PC-9 (cell line): ENCODE measurements at regions of chr7 and their contacts with region 1.

Region 1: DNA sequence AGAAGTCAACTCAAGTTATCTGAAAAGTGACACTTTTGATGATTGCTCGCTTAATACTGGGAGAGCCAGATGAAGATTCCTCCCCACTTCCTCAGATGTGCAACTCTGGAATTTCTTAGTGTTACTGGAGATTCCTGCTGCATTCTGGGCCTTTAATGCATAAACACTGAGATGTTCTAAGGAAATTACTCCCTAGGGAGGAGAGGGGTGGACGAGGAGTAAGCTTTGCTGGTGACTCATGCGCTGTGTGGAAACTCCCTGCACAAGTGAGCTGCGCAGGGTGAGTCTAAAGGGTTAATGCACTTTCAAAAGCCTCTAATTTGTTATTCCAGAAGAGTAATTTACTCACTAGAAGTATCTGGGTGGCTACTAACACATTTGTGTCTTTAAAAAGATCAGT is 46.3 kb downstream of the EGFR start:
- DNase-seq: peak; percentile 78 to 96
- H3K4me3 ChIP-seq: peak overlapping the region; percentile 27
- H3K27ac ChIP-seq: peak overlapping the region; percentile 96
- H3K4me1 ChIP-seq: peaks cover 58% of the 10 kb centered on the region
- H3K27me3 ChIP-seq: no peaks in the 10 kb centered on the region
- CTCF ChIP-seq: no peak

Region 2: GRCh38 chr7:54877683-54878082 is 187.4 kb before region 1 on chr7:
- CTCF ChIA-PET with region 1: no interaction called
- POLR2A ChIA-PET with region 1: no interaction called
- intact Hi-C with region 1: loop called (anchors 1 kb)
- DNase-seq: peak; percentile 35 to 73
- H3K4me3 ChIP-seq: no peak overlapping the region
- H3K27ac ChIP-seq: no peak overlapping the region
- H3K4me1 ChIP-seq: peaks cover 8% of the 10 kb centered on the region
- H3K27me3 ChIP-seq: no peaks in the 10 kb centered on the region
- CTCF ChIP-seq: peak; percentile 67

Region 3: GRCh38 chr7:54967384-54967783 is 97.7 kb before region 1 on chr7:
- CTCF ChIA-PET with region 1: no interaction called
- POLR2A ChIA-PET with region 1: interaction called, 4 read pairs
- intact Hi-C with region 1: loop called (anchors 1 kb)
- DNase-seq: peak; percentile 92 to 100
- H3K4me3 ChIP-seq: peak overlapping the region; percentile 2; the same call in 1 of the 2 replicates
- H3K27ac ChIP-seq: peak overlapping the region; percentile 89
- H3K4me1 ChIP-seq: peaks cover 50% of the 10 kb centered on the region
- H3K27me3 ChIP-seq: no peaks in the 10 kb centered on the region
- CTCF ChIP-seq: no peak

Region 4: DNA sequence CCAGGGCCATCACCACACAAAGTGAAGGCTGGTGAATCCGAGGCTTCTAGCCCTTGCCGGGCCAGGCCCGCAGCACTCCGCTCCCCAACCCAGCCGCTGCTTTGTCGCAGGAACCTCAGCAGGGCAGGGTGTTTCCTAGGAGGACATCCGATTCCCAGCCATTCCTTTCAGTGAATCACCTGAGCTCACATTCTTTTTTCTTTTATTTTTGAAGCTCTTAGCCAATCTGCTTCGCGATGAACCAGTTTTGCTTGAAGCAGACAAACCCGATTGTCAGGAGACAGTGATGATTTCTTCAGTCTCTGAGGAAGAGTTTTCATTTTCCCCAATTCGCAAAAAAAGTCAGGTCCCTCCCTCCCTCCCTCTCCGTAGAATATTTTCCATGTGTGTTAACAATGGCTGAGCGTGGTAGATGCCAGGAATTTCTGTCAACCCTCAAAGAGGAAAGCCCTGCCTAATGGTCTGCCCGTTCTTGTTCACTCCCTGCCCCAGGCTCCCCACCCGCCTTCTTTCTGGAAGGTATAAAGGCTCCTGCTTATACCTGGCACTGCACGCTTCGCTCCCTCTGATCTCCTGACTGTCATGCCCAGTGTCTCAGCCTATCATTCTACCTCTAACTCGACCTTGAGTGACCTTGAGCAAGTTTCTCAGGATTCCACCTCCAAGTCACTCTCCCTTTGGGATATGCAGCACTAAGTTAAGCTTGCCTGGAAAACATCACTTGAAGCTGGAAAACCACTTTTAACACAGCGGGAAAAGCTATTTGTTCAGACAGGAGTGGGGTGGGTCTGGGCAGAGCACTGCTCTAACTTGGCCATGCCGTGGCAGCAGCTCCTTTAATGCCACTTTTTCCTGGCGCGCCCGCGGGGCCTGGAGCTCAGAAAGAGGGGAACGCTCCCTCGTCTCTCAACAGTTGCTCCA is 11.2 kb before region 1 on chr7:
- CTCF ChIA-PET with region 1: interaction called, 4 read pairs
- POLR2A ChIA-PET with region 1: interaction called, 7 read pairs
- intact Hi-C with region 1: loop called (anchors 1 kb)
- DNase-seq: peak; percentile 90 to 98
- H3K4me3 ChIP-seq: peak overlapping the region; percentile 2; the same call in 1 of the 2 replicates
- H3K27ac ChIP-seq: peak overlapping the region; percentile 82
- H3K4me1 ChIP-seq: peaks cover 72% of the 10 kb centered on the region
- H3K27me3 ChIP-seq: no peaks in the 10 kb centered on the region
- CTCF ChIP-seq: no peak

Region 5: GRCh38 chr7:55120481-55121198 is 55.6 kb after region 1 on chr7:
- CTCF ChIA-PET with region 1: no interaction called
- POLR2A ChIA-PET with region 1: no interaction called
- intact Hi-C with region 1: loop called (anchors 1 kb)
- DNase-seq: peak; percentile 71 to 98
- H3K4me3 ChIP-seq: peak overlapping the region; percentile 3; the same call in 1 of the 2 replicates
- H3K27ac ChIP-seq: peak overlapping the region; percentile 79
- H3K4me1 ChIP-seq: peaks cover 77% of the 10 kb centered on the region
- H3K27me3 ChIP-seq: no peaks in the 10 kb centered on the region
- CTCF ChIP-seq: no peak

Region 6: GRCh38 chr7:55185941-55186609 is 121.0 kb after region 1 on chr7:
- CTCF ChIA-PET with region 1: no interaction called
- POLR2A ChIA-PET with region 1: no interaction called
- intact Hi-C with region 1: loop called (anchors 1 kb)
- DNase-seq: peak; percentile 97 to 99
- H3K4me3 ChIP-seq: no peak overlapping the region
- H3K27ac ChIP-seq: peak overlapping the region; percentile 51
- H3K4me1 ChIP-seq: peaks cover 27% of the 10 kb centered on the region
- H3K27me3 ChIP-seq: no peaks in the 10 kb centered on the region
- CTCF ChIP-seq: no peak